PC-3 (cell line): ENCODE measurements at regions of chr17 and their contacts with region 1.

Region 1: DNA sequence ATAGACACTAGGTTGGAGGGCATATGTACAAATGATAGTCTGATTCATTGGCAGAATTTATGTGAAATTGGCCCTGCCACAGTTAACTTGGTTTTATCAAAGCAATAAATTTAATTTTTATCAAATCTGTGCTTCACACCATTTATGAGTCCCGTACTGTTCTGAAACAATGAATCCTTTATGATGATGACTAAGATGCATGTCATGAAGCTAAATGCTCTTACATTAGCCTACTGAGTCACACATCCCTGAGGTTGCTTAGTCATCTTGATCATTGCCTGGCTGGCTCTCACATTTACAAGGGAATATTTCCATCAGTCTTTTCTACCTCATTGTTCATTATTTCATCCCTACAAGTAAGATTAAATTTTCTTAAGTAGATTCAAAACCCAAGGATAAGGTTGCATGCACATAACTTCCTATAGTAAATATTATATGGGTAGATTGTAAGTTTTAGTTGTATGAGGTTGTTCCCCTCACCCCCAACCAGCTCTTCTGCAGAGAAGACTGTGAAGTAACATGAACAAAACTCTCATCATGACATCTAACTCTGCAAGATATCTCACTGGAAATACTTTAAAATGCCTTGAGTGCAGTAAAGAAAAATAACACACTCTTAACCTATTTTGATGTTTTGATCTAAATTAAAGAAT is 170.7 kb downstream of the CYB561 start:
- DNase-seq: peak; percentile 99
- ATAC-seq: peak; percentile 82
- H3K4me3 ChIP-seq: peak overlapping the region; percentile 24; the same call in 1 of the 2 replicates
- H3K27ac ChIP-seq: peak overlapping the region; percentile 91
- H3K4me1 ChIP-seq: peaks cover 67% of the 10 kb centered on the region
- H3K27me3 ChIP-seq: no peaks in the 10 kb centered on the region
- CTCF ChIP-seq: no peak

Region 2: DNA sequence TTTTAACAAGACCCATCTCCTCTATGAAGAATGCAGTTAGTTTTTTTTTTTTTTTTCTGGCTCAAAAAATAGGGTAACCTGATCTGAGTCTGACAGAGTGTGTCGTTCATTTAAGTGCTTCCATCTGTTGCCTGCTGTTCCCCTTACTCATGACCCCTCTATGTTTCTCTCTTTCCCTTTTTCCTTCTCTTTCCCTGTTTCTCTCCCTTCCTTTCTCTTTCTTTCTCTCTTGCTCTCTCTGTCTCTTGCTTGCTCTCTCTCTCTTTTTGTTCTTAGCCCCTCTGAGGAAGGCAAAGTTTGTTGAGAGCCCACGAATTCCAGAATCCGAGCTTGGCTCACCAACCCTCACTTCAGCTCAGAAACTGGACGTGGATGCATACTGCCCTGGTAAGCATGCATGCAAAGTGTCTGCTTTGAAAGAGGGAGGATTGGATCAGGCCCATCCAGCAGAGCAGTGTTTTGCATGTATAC is 124.4 kb before region 1 on chr17:
- CTCF ChIA-PET with region 1: no interaction called
- POLR2A ChIA-PET with region 1: interaction called, 10 read pairs
- intact Hi-C with region 1: no loop called
- DNase-seq: no peak
- ATAC-seq: no peak
- H3K4me3 ChIP-seq: no peak overlapping the region
- H3K27ac ChIP-seq: no peak overlapping the region
- H3K4me1 ChIP-seq: no peaks in the 10 kb centered on the region
- H3K27me3 ChIP-seq: no peaks in the 10 kb centered on the region
- CTCF ChIP-seq: no peak

Region 3: GRCh38 chr17:63309021-63309420 is 33.6 kb after region 1 on chr17:
- CTCF ChIA-PET with region 1: no interaction called
- POLR2A ChIA-PET with region 1: no interaction called
- intact Hi-C with region 1: loop called (anchors 1 kb)
- DNase-seq: peak; percentile 77
- ATAC-seq: peak; percentile 86
- H3K4me3 ChIP-seq: no peak overlapping the region
- H3K27ac ChIP-seq: peak overlapping the region; percentile 23
- H3K4me1 ChIP-seq: peaks cover 9% of the 10 kb centered on the region
- H3K27me3 ChIP-seq: no peaks in the 10 kb centered on the region
- CTCF ChIP-seq: no peak

Region 4: GRCh38 chr17:63325808-63326207 is 50.4 kb after region 1 on chr17:
- CTCF ChIA-PET with region 1: no interaction called
- POLR2A ChIA-PET with region 1: no interaction called
- intact Hi-C with region 1: no loop called
- DNase-seq: no peak
- ATAC-seq: no peak
- H3K4me3 ChIP-seq: no peak overlapping the region
- H3K27ac ChIP-seq: no peak overlapping the region
- H3K4me1 ChIP-seq: no peaks in the 10 kb centered on the region
- H3K27me3 ChIP-seq: no peaks in the 10 kb centered on the region
- CTCF ChIP-seq: no peak

Region 5: GRCh38 chr17:63356337-63356757 is 80.9 kb after region 1 on chr17:
- CTCF ChIA-PET with region 1: no interaction called
- POLR2A ChIA-PET with region 1: no interaction called
- intact Hi-C with region 1: loop called (anchors 5 kb)
- DNase-seq: peak; percentile 83
- ATAC-seq: peak; percentile 100
- H3K4me3 ChIP-seq: no peak overlapping the region
- H3K27ac ChIP-seq: peak overlapping the region; percentile 21
- H3K4me1 ChIP-seq: peaks cover 12% of the 10 kb centered on the region
- H3K27me3 ChIP-seq: no peaks in the 10 kb centered on the region
- CTCF ChIP-seq: no peak